ENCODE measurements at regions of chr21 and their contacts with region 1.

Region 1: GRCh38 chr21:36927719-36928117 is 38.8 kb downstream of the HLCS start:
- DNase-seq: peak; percentile 97
- ATAC-seq: peak; percentile 96
- H3K4me3 ChIP-seq: no peak overlapping the region
- H3K27ac ChIP-seq: no peak overlapping the region; the same call in 1 of the 2 replicates
- H3K4me1 ChIP-seq: peaks cover 10% of the 10 kb centered on the region
- H3K27me3 ChIP-seq: no peaks in the 10 kb centered on the region
- CTCF ChIP-seq: peak; percentile 97
- POLR2A ChIP-seq: no peak
- RAD21 ChIP-seq: peak; percentile 95

Region 2: GRCh38 chr21:36419996-36420395 is 507.7 kb before region 1 on chr21:
- CTCF ChIA-PET with region 1: no interaction called
- POLR2A ChIA-PET with region 1: no interaction called
- dilution Hi-C with region 1: no loop called
- in situ Hi-C with region 1: loop called (anchors 5 kb)
- intact Hi-C with region 1: loop called (anchors 2 kb)
- DNase-seq: peak; percentile 92
- ATAC-seq: peak; percentile 98
- H3K4me3 ChIP-seq: no peak overlapping the region
- H3K27ac ChIP-seq: no peak overlapping the region
- H3K4me1 ChIP-seq: no peaks in the 10 kb centered on the region
- H3K27me3 ChIP-seq: no peaks in the 10 kb centered on the region
- CTCF ChIP-seq: peak; percentile 93
- POLR2A ChIP-seq: no peak
- RAD21 ChIP-seq: peak; percentile 97

Region 3: GRCh38 chr21:36630485-36631206 is 297.1 kb before region 1 on chr21:
- CTCF ChIA-PET with region 1: interaction called, 4 read pairs
- POLR2A ChIA-PET with region 1: no interaction called
- dilution Hi-C with region 1: no loop called
- in situ Hi-C with region 1: no loop called
- intact Hi-C with region 1: loop called (anchors 1 kb)
- DNase-seq: peak; percentile 22
- ATAC-seq: no peak
- H3K4me3 ChIP-seq: no peak overlapping the region
- H3K27ac ChIP-seq: no peak overlapping the region
- H3K4me1 ChIP-seq: no peaks in the 10 kb centered on the region; the same call in 1 of the 2 replicates
- H3K27me3 ChIP-seq: peaks cover 24% of the 10 kb centered on the region
- CTCF ChIP-seq: peak; percentile 56
- POLR2A ChIP-seq: no peak
- RAD21 ChIP-seq: peak; percentile 60

Region 4: DNA sequence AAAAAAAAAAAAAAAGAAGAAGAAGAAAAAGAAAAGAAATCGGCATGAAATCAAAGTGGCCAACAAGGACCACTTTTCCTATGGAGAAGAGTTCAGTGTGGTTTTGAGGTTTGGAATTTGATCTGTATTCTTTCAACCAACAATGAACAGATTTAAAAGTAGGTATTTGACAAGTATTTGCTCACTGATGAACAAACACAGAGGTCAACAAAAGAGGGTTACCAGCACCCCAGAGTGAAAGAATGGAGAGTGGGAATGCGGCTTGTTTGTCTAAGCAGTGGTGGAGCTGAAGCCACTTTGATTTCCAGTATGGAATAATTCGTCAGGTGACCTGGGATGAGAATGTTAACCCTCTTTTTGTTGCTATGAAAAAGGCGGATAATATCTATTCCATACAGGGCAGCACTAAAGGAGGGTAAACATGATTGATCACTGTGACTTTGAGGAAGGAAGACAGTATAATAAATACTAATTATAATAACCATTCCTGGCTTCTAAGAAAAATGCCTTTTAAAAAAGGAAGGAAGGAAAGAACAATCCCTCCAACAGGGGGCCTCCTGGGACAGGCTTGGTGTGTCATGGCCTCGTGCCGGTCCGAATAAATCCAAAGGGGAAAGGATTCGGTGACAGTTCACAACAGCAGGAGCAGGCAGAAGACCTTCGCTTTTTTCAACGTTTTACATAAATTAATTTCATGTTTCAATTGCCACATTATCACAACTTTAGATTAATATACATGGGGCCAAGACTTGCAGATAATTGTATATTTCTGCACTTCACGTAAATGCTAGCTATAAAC is 266.0 kb before region 1 on chr21:
- CTCF ChIA-PET with region 1: no interaction called
- POLR2A ChIA-PET with region 1: no interaction called
- dilution Hi-C with region 1: no loop called
- in situ Hi-C with region 1: no loop called
- intact Hi-C with region 1: loop called (anchors 1 kb)
- DNase-seq: peak; percentile 48
- ATAC-seq: peak; percentile 75
- H3K4me3 ChIP-seq: no peak overlapping the region
- H3K27ac ChIP-seq: no peak overlapping the region
- H3K4me1 ChIP-seq: peaks cover 3% of the 10 kb centered on the region; the same call in 1 of the 2 replicates
- H3K27me3 ChIP-seq: peaks cover 30% of the 10 kb centered on the region
- CTCF ChIP-seq: peak; percentile 67
- POLR2A ChIP-seq: no peak
- RAD21 ChIP-seq: peak; percentile 67

Region 5: GRCh38 chr21:36747815-36748383 is 179.8 kb before region 1 on chr21:
- CTCF ChIA-PET with region 1: interaction called, 4 read pairs
- POLR2A ChIA-PET with region 1: interaction called, 32 read pairs
- dilution Hi-C with region 1: no loop called
- in situ Hi-C with region 1: loop called (anchors 5 kb)
- intact Hi-C with region 1: no loop called
- DNase-seq: peak; percentile 34
- ATAC-seq: peak; percentile 96
- H3K4me3 ChIP-seq: peak overlapping the region; percentile 55
- H3K27ac ChIP-seq: no peak overlapping the region; the same call in 1 of the 2 replicates
- H3K4me1 ChIP-seq: peaks cover 11% of the 10 kb centered on the region
- H3K27me3 ChIP-seq: peaks cover 2% of the 10 kb centered on the region
- CTCF ChIP-seq: peak; percentile 56
- POLR2A ChIP-seq: no peak
- RAD21 ChIP-seq: peak; percentile 55

Region 6: DNA sequence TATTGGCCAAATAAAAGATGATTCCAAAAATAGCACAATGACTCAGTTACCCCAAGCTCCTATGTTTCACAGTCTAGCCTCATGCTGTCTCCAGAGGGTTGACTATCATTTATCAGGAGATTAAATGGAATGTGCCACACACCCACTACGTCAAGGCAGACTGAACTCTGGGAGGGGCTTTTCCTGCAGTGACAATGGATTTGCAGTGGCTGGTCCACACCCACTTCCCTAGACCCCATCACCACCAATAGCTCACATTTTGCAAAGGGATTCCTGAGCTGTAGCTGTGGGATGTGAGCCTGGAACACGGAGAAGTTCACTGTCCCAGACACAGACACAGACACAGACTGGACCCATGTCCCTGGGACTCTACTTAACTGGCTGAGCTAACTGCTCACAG is 38.3 kb before region 1 on chr21:
- CTCF ChIA-PET with region 1: no interaction called
- POLR2A ChIA-PET with region 1: no interaction called
- dilution Hi-C with region 1: no loop called
- in situ Hi-C with region 1: no loop called
- intact Hi-C with region 1: no loop called
- DNase-seq: no peak
- ATAC-seq: no peak
- H3K4me3 ChIP-seq: no peak overlapping the region
- H3K27ac ChIP-seq: no peak overlapping the region
- H3K4me1 ChIP-seq: no peaks in the 10 kb centered on the region; the same call in 1 of the 2 replicates
- H3K27me3 ChIP-seq: no peaks in the 10 kb centered on the region
- CTCF ChIP-seq: no peak
- POLR2A ChIP-seq: no peak
- RAD21 ChIP-seq: no peak

Region 7: GRCh38 chr21:36976882-36977651 is 49.3 kb after region 1 on chr21:
- CTCF ChIA-PET with region 1: no interaction called
- POLR2A ChIA-PET with region 1: no interaction called
- dilution Hi-C with region 1: no loop called
- in situ Hi-C with region 1: no loop called
- intact Hi-C with region 1: no loop called
- DNase-seq: peak; percentile 75
- ATAC-seq: peak; percentile 85
- H3K4me3 ChIP-seq: no peak overlapping the region
- H3K27ac ChIP-seq: no peak overlapping the region
- H3K4me1 ChIP-seq: peaks cover 5% of the 10 kb centered on the region
- H3K27me3 ChIP-seq: no peaks in the 10 kb centered on the region; the same call in 1 of the 2 replicates
- CTCF ChIP-seq: peak; percentile 89
- POLR2A ChIP-seq: no peak
- RAD21 ChIP-seq: peak; percentile 66